Activated CD4-positive, alpha-beta T cell treated with anti-CD3 and anti-CD28 coated beads, Interleukin-2, amount 10 ng/mL, durations not matched to agents 24 days and 14 days (primary cell): ENCODE measurements at regions of chr20 and their contacts with region 1.

Region 1: GRCh38 chr20:38875175-38875993 is 50.8 kb upstream of the FAM83D start:
- DNase-seq: peak; percentile 89
- H3K4me3 Mint-ChIP-seq: peak overlapping the region; percentile 92
- H3K27ac Mint-ChIP-seq: peak overlapping the region; percentile 99
- H3K4me1 Mint-ChIP-seq: peaks cover 79% of the 10 kb centered on the region
- H3K27me3 Mint-ChIP-seq: peaks cover 2% of the 10 kb centered on the region

Region 2: DNA sequence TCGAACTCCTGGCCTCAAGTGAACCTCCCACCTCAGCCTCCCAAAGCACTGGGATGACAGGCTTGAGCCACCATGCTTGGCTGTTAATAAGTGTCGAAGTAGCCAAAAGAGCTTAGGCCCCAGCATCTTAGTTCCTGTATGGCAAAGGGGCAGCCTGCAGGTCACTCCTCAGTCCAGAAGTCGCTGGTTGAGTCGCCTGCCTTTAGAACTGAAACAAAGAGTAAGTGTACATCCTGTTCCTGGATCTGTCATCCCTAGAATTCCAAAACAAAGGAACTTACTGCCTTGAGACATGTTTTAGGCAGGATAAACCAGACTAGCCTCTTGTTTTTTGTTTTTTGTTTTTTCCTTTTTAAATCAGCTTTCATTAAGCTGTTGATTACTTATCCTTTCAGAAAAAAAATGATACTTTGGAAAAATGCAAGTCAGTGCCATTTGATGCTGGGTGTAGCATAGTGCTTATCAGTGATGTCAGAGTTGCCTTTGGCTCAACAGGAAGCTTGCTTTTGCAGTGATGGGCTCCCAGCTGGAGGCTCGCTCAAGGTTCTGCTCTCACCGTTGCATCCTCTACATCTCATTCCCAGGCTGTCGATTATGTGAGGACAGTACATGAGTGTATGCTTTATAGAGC is 118.1 kb before region 1 on chr20:
- intact Hi-C with region 1: no loop called
- DNase-seq: no peak
- H3K4me3 Mint-ChIP-seq: no peak overlapping the region
- H3K27ac Mint-ChIP-seq: no peak overlapping the region
- H3K4me1 Mint-ChIP-seq: peaks cover 7% of the 10 kb centered on the region
- H3K27me3 Mint-ChIP-seq: no peaks in the 10 kb centered on the region

Region 3: GRCh38 chr20:38805502-38805957 is 69.9 kb before region 1 on chr20 and contains the start of gene PPP1R16B:
- intact Hi-C with region 1: loop called (anchors 1 kb)
- DNase-seq: peak; percentile 95
- H3K4me3 Mint-ChIP-seq: peak within 1 kb of the TSS; percentile 92
- H3K27ac Mint-ChIP-seq: peak within 1 kb of the TSS; percentile 96
- H3K4me1 Mint-ChIP-seq: peaks cover 48% of the 10 kb centered on the region
- H3K27me3 Mint-ChIP-seq: no peaks in the 10 kb centered on the region
- total RNA-seq, gene PPP1R16B: 133 TPM in 2 replicates

Region 4: GRCh38 chr20:38842558-38842981 is 32.8 kb before region 1 on chr20:
- intact Hi-C with region 1: loop called (anchors 1 kb)
- DNase-seq: peak; percentile 73
- H3K4me3 Mint-ChIP-seq: peak overlapping the region; percentile 78
- H3K27ac Mint-ChIP-seq: peak overlapping the region; percentile 98
- H3K4me1 Mint-ChIP-seq: peaks cover 65% of the 10 kb centered on the region
- H3K27me3 Mint-ChIP-seq: no peaks in the 10 kb centered on the region

Region 5: GRCh38 chr20:38893565-38894090 is 18.2 kb after region 1 on chr20:
- intact Hi-C with region 1: loop called (anchors 1 kb)
- DNase-seq: peak; percentile 94
- H3K4me3 Mint-ChIP-seq: peak overlapping the region; percentile 64
- H3K27ac Mint-ChIP-seq: peak overlapping the region; percentile 88
- H3K4me1 Mint-ChIP-seq: peaks cover 39% of the 10 kb centered on the region
- H3K27me3 Mint-ChIP-seq: no peaks in the 10 kb centered on the region

Region 6: GRCh38 chr20:38941726-38942389 is 66.5 kb after region 1 on chr20:
- intact Hi-C with region 1: no loop called
- DNase-seq: no peak
- H3K4me3 Mint-ChIP-seq: no peak overlapping the region
- H3K27ac Mint-ChIP-seq: peak overlapping the region; percentile 10
- H3K4me1 Mint-ChIP-seq: peaks cover 14% of the 10 kb centered on the region
- H3K27me3 Mint-ChIP-seq: no peaks in the 10 kb centered on the region

Region 7: DNA sequence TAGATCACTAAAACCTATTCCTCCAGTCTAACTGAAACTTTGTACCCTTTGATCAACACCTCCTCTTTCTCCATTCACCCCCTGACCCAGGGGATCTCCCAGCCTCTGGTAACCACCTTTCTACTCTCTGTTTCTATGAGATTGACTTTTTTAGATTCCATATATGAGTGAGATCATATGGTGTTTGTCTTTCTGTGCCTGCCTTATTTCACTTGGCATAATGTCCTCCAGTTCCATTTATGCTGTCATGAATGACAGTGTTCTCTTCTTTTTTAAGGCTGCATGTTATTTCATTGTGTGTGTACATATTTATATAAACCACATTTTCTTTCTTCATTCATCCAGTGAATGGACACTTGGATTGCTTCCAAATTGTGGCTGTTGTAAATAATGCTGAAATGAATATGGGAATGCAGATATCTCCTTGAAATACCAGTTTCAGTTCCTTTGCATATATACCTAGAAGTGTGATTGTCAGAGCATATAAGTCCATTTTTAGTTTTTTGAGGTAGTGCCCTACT is 144.5 kb after region 1 on chr20:
- intact Hi-C with region 1: loop called (anchors 2 kb)
- DNase-seq: peak; percentile 68
- H3K4me3 Mint-ChIP-seq: peak overlapping the region; percentile 1
- H3K27ac Mint-ChIP-seq: peak overlapping the region; percentile 38
- H3K4me1 Mint-ChIP-seq: peaks cover 43% of the 10 kb centered on the region
- H3K27me3 Mint-ChIP-seq: no peaks in the 10 kb centered on the region

Region 8: GRCh38 chr20:39234520-39235095 is 359.2 kb after region 1 on chr20:
- intact Hi-C with region 1: no loop called
- DNase-seq: no peak
- H3K4me3 Mint-ChIP-seq: no peak overlapping the region
- H3K27ac Mint-ChIP-seq: no peak overlapping the region
- H3K4me1 Mint-ChIP-seq: no peaks in the 10 kb centered on the region
- H3K27me3 Mint-ChIP-seq: no peaks in the 10 kb centered on the region